Posterior vena cava (tissue), 2 donors: ENCODE measurements at regions of chr1 and their contacts with region 1.

Region 1: GRCh38 chr1:26695356-26696118 is at the start of gene ARID1A:
- DNase-seq: peak; percentile 99
- total RNA-seq, gene ARID1A: 48.1 to 48.6 TPM

Region 2: GRCh38 chr1:26771643-26772321 is 76.2 kb after region 1 on chr1:
- intact Hi-C with region 1: loop called in 1 of 2 experiments (anchors 5 kb)
- DNase-seq: no peak

Region 3: GRCh38 chr1:26787706-26788514 is 92.4 kb after region 1 on chr1 and contains the start of gene PIGV:
- intact Hi-C with region 1: loop called (anchors 5 kb)
- DNase-seq: peak; percentile 96
- total RNA-seq, gene PIGV: 6.3 to 7.9 TPM